ENCODE measurements at regions of chr9 and their contacts with region 1.

Region 1: GRCh38 chr9:90219548-90220118 is 423.0 kb downstream of the DIRAS2 start:
- DNase-seq: peak in 1 of 5 donors; percentile 31
- ATAC-seq: peak in 1 of 4 donors; percentile 44
- H3K4me3 ChIP-seq: no peak overlapping the region
- H3K27ac ChIP-seq: no peak overlapping the region
- H3K4me1 ChIP-seq: no peaks in the 10 kb centered on the region
- H3K27me3 ChIP-seq: peaks cover 0 to 16% (median 6%) of the 10 kb centered on the region in 9 donors
- CTCF ChIP-seq: peak; percentile 23 to 50 (median 34)
- POLR2A ChIP-seq: no peak

Region 2: DNA sequence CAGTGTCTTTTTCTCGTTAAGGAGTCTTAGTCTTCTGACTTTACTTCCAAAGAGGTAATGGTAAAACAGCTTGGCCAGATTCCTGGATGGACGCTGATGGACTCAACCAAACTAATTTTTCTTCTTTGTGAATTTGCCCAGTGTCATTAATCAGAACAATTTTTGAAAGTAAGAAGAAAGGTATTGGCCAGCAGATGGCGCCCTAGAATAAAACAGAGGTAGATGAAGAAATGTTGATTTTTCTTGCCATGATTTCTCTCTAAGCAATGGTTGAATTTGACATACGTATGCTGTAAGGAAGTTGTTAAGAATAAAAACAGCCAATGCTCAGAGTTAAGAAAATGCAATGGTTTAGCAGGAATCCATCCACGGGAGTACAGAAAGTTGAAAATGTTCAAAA is 77.1 kb before region 1 on chr9:
- intact Hi-C with region 1: loop called in 2 of 10 experiments (anchors 10 kb)
- DNase-seq: peak in 2 of 5 donors; percentile 17 to 42
- ATAC-seq: no peak
- H3K4me3 ChIP-seq: no peak overlapping the region
- H3K27ac ChIP-seq: no peak overlapping the region
- H3K4me1 ChIP-seq: no peaks in the 10 kb centered on the region
- H3K27me3 ChIP-seq: peaks cover 0 to 8% (median 0%) of the 10 kb centered on the region in 9 donors
- CTCF ChIP-seq: peak; percentile 50 to 67 (median 60)
- POLR2A ChIP-seq: no peak

Region 3: GRCh38 chr9:90349907-90350306 is 130.3 kb after region 1 on chr9:
- intact Hi-C with region 1: no loop called
- DNase-seq: no peak
- ATAC-seq: no peak
- H3K4me3 ChIP-seq: no peak overlapping the region
- H3K27ac ChIP-seq: no peak overlapping the region
- H3K4me1 ChIP-seq: no peaks in the 10 kb centered on the region
- H3K27me3 ChIP-seq: peaks cover 0 to 19% (median 0%) of the 10 kb centered on the region in 9 donors
- CTCF ChIP-seq: no peak
- POLR2A ChIP-seq: no peak